ENCODE measurements at regions of chr3 and their contacts with region 1.

Region 1: GRCh38 chr3:115783938-115784738 is 160.8 kb downstream of the GAP43 start:
- DNase-seq: peak; percentile 73 to 92
- H3K4me3 ChIP-seq: peak overlapping the region; percentile 84 to 95
- H3K27ac ChIP-seq: peak overlapping the region; percentile 86 to 95
- H3K4me1 ChIP-seq: peaks cover 3% of the 10 kb centered on the region in 2 donors
- H3K27me3 ChIP-seq: no peaks in the 10 kb centered on the region
- CTCF ChIP-seq: peak; percentile 91 to 99 (median 97)

Region 2: DNA sequence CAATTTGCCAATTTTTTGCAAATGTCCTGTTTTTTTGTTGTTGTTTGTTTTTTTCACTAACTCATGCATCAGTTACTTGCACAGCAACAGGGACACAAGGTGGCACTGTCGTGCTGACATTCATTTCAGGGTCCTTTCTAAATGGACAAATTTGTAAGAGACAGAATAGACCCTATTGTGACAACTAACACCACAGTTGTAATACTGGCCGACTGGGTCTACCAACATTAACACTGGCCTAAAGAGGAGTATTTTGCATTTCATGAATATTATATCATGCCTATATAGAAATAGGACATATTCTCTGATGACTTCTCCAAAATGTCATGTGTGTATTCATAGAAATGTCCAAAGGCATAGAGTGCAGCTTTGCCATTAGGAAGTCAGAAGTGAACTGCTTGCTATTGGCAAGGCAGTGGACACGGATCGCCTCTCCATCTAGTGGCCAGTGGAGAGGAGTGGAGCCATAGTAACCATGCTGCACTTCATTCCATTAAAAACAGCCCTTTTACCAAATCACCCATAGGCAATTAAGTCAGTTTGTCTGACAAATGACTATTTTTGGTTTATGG is 691.8 kb before region 1 on chr3:
- intact Hi-C with region 1: loop called (anchors 10 kb)
- DNase-seq: peak in 1 of 2 donors; percentile 74
- H3K4me3 ChIP-seq: no peak overlapping the region
- H3K27ac ChIP-seq: no peak overlapping the region
- H3K4me1 ChIP-seq: peaks cover 0 to 8% of the 10 kb centered on the region in 2 donors
- H3K27me3 ChIP-seq: no peaks in the 10 kb centered on the region
- CTCF ChIP-seq: peak; percentile 1 to 55 (median 52)

Region 3: DNA sequence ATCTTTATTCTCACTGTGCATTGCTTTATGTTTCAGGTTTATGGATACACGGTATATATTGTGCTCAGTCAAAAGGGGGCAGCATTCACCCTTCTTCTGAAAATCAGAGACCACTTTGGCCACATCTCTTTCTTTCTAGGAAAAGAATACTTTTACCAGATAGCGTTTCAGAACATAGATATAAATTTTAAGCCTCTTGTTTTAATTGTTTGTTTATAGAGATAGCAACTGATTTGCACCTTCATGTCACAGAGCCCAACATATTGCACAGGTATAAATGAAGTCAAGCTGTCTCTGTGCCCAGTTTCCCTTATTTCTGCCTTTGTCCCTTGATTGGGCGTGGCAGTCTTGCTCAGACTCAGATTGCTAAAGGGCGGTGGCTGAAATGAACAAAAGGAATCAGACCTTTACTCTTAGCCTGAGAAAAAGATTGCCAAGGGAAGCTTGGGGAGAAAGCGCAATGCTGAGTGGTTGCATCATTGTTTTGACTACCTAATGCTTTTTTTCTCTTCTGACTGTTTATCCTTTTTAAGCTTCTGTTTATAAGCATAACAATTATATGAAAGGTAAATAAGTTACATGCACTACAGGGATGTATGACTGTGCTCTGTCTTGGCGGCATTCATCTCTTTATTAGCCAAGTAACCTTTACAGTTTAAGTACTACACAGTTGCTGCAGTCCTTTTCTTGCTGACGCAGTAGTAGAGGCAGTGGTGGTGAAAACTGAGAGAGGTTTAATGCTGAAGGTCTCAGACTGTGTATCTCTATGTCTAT is 566.3 kb before region 1 on chr3:
- intact Hi-C with region 1: loop called (anchors 2 kb)
- DNase-seq: no peak
- H3K4me3 ChIP-seq: peak overlapping the region in 1 of 2 donors; percentile 28
- H3K27ac ChIP-seq: no peak overlapping the region
- H3K4me1 ChIP-seq: peaks cover 2 to 4% of the 10 kb centered on the region in 2 donors
- H3K27me3 ChIP-seq: no peaks in the 10 kb centered on the region
- CTCF ChIP-seq: peak; percentile 56 to 74 (median 62)

Region 4: GRCh38 chr3:115401851-115402501 is 382.2 kb before region 1 on chr3:
- intact Hi-C with region 1: loop called (anchors 1 kb)
- DNase-seq: no peak
- H3K4me3 ChIP-seq: no peak overlapping the region
- H3K27ac ChIP-seq: peak overlapping the region; percentile 80 to 85
- H3K4me1 ChIP-seq: peaks cover 0 to 6% of the 10 kb centered on the region in 2 donors
- H3K27me3 ChIP-seq: no peaks in the 10 kb centered on the region
- CTCF ChIP-seq: no peak

Region 5: DNA sequence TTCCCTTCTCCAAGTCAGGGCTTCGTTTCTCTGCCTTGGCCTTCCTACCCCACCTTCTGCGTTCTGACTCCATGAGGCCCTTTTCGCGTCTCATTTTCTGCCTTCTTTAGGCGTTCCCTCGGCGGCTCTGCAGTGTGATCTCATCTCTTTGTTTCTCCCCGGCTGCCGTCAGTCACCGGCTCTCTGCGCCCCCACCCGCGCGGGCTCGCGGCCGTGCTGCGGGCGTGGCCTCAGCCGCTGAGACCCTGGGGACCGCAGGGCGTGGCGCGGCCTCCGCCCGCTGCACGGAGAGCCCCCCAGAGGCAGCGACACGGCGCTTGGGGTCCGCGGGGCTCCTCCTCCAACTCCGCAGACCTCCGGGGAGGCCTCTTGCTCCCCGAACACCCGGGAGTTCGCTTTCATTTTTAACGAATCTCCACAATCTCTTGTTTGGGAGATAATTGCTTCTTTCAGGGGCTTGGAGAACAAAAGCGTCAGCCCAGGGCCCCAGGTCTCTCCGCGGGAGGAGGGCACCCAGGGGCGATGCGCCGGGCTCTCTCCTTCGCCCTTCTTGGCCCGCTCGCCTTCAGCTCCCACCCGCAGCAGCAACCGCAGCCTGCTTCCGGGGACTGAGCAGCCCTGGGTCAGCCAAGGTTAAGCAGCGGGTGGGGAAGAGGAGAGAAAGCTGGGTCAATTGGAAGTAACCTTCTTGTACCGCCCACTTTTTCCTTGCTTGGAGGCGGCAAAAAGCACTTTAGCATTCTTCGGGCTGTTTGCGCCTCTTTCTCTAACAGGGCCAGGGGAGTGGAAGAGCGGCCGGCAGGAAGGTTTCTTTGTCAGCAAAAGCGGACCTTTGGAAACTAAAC is 125.6 kb before region 1 on chr3:
- intact Hi-C with region 1: loop called (anchors 2 kb)
- DNase-seq: peak; percentile 29 to 91
- H3K4me3 ChIP-seq: peak overlapping the region; percentile 57 to 88
- H3K27ac ChIP-seq: peak overlapping the region; percentile 95 to 96
- H3K4me1 ChIP-seq: peaks cover 3 to 12% of the 10 kb centered on the region in 2 donors
- H3K27me3 ChIP-seq: no peaks in the 10 kb centered on the region
- CTCF ChIP-seq: no peak

Region 6: GRCh38 chr3:115692887-115693524 is 91.1 kb before region 1 on chr3:
- intact Hi-C with region 1: loop called (anchors 1 kb)
- DNase-seq: peak in 1 of 2 donors; percentile 90
- H3K4me3 ChIP-seq: no peak overlapping the region
- H3K27ac ChIP-seq: no peak overlapping the region
- H3K4me1 ChIP-seq: no peaks in the 10 kb centered on the region
- H3K27me3 ChIP-seq: no peaks in the 10 kb centered on the region
- CTCF ChIP-seq: peak; percentile 75 to 85 (median 77)

Region 7: GRCh38 chr3:115814778-115815380 is 30.7 kb after region 1 on chr3:
- intact Hi-C with region 1: loop called (anchors 2 kb)
- DNase-seq: peak in 1 of 2 donors; percentile 86
- H3K4me3 ChIP-seq: no peak overlapping the region
- H3K27ac ChIP-seq: no peak overlapping the region
- H3K4me1 ChIP-seq: no peaks in the 10 kb centered on the region
- H3K27me3 ChIP-seq: no peaks in the 10 kb centered on the region
- CTCF ChIP-seq: peak; percentile 63 to 92 (median 89)

Region 8: DNA sequence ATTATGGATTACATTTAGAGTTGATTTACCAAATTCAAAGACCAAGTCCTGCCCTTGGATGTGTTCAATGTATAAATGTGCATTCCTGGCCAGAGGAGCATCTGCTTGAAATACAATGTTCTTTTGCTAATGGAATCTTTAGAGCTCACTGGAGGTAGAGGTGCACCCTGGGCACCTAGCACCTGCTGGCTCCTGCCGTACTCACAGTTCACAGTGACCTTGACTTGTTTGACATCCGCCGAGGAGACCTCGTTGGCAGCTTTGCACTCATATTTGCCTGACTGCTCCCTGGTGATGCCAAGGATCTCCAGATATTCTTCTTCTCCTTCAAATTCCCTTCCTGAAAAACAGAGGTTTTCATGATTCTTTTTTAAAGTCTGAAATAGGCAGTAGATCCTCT is 68.1 kb after region 1 on chr3:
- intact Hi-C with region 1: no loop called
- DNase-seq: no peak
- H3K4me3 ChIP-seq: no peak overlapping the region
- H3K27ac ChIP-seq: no peak overlapping the region
- H3K4me1 ChIP-seq: no peaks in the 10 kb centered on the region
- H3K27me3 ChIP-seq: no peaks in the 10 kb centered on the region
- CTCF ChIP-seq: no peak